PC-3 (cell line): ENCODE measurements at regions of chr3 and their contacts with region 1.

Region 1: DNA sequence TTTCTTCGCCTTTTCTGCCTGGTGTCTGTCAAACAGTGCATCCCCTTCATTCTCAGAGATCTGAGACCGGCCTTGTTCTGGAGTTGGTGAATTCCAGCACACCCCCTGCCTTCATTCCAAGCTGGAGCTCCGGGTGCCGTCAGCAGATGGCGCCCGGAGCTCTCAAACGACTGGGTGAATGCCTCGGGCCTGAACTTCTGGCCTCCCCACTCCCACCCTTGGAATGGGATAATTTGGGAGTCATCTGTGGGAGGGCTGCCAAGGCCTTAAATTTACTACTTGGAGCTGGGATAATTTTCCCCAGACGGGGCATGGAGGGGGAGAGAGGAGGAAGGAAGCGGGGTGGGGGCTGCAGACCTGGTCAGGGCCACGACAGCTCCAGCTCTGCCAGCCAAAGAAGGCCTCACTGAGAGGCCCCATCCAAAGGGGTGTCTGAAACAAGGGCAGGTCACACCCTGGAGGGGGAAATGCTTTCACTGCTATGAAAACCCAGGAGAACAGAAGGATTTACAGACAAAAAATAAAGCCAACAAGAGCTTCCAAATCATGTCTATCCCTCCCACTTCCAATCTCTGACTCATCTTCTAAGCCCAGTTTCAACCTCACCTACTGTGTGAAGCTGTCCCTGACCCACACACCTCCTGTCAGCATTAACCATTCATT is 187.9 kb downstream of the OPA1 start:
- DNase-seq: peak; percentile 95
- ATAC-seq: peak; percentile 84
- H3K4me3 ChIP-seq: no peak overlapping the region
- H3K27ac ChIP-seq: peak overlapping the region; percentile 78
- H3K4me1 ChIP-seq: peaks cover 47% of the 10 kb centered on the region
- H3K27me3 ChIP-seq: no peaks in the 10 kb centered on the region
- CTCF ChIP-seq: peak; percentile 97

Region 2: GRCh38 chr3:193831495-193832455 is 50.8 kb after region 1 on chr3:
- CTCF ChIA-PET with region 1: no interaction called
- POLR2A ChIA-PET with region 1: no interaction called
- intact Hi-C with region 1: loop called (anchors 5 kb)
- DNase-seq: no peak
- ATAC-seq: no peak
- H3K4me3 ChIP-seq: no peak overlapping the region
- H3K27ac ChIP-seq: no peak overlapping the region
- H3K4me1 ChIP-seq: peaks cover 45% of the 10 kb centered on the region
- H3K27me3 ChIP-seq: no peaks in the 10 kb centered on the region
- CTCF ChIP-seq: no peak

Region 3: DNA sequence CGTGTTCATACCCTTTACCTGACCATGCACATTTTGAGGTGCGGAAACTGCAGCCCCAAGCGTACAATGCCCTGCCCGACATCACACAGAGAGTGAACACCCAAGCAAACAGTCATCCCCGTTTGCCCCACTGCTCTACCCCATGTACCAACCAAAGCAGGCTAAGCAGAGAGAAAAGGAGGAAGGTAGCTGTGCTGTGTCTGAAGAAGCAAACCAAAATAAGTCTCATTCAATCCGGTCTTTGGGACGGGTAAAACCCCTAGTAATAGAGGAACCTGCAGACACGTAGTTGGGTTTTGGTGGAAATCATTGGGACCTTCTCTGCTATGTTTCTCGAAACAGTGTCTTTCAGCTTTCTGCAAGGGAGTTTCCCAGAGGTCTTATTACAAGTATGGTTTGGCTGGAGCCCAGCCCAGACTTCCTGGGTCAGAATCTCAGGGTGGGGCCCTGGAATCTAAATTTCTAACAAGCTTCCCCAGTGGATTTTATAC is 190.4 kb after region 1 on chr3:
- CTCF ChIA-PET with region 1: no interaction called
- POLR2A ChIA-PET with region 1: no interaction called
- intact Hi-C with region 1: loop called (anchors 2 kb)
- DNase-seq: peak; percentile 81
- ATAC-seq: peak; percentile 86
- H3K4me3 ChIP-seq: peak overlapping the region; percentile 66
- H3K27ac ChIP-seq: peak overlapping the region; percentile 91
- H3K4me1 ChIP-seq: peaks cover 35% of the 10 kb centered on the region
- H3K27me3 ChIP-seq: no peaks in the 10 kb centered on the region
- CTCF ChIP-seq: no peak

Region 4: GRCh38 chr3:194070634-194071409 is 289.9 kb after region 1 on chr3:
- CTCF ChIA-PET with region 1: no interaction called
- POLR2A ChIA-PET with region 1: interaction called, 3 read pairs
- intact Hi-C with region 1: loop called (anchors 5 kb)
- DNase-seq: peak; percentile 93
- ATAC-seq: peak; percentile 80
- H3K4me3 ChIP-seq: peak overlapping the region; percentile 60
- H3K27ac ChIP-seq: no peak overlapping the region
- H3K4me1 ChIP-seq: peaks cover 35% of the 10 kb centered on the region
- H3K27me3 ChIP-seq: no peaks in the 10 kb centered on the region
- CTCF ChIP-seq: no peak

Region 5: DNA sequence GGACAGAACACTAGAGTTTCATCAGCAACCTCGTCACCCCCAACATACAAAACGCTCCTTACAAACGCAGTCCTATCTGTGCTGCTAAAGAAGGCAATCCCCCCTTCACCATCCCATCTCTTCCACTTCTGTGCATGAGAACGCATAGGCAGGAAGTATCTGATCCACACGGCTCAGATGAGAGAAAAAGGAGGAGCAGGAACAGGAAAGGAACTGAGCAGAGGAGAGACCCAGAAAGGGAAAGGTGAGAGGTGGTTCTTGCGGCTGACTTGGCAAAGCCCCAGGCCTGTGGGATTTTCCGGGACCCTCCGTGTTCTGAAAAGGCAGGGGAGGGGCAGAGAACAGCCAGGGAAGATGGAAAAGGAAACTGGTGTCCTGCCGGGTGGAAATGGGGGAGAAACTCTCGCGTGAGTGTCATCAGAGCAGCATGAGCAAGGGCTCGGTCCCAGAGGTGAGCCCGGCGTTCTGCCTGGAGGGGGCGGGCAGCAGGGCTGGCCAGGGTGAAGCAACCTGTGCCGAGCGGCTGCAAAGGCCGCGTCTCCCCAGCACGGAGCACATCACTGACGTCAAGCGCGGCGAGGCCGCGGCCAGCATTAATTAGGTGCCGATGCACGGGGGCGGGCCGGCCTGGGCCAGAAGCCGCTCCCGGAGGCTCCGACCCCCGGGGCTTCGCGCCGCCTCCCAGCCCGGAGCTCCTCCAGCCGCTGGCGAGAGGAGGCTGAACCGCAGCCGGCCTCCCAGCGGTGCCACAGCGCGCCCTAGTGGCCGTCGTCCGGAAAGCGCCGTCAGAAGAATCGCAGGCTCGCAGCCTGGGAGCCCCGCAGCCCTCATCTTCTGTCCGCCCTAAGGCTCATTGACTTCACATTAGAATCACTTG is 534.4 kb after region 1 on chr3:
- CTCF ChIA-PET with region 1: interaction called, 50 read pairs
- POLR2A ChIA-PET with region 1: interaction called, 12 read pairs
- intact Hi-C with region 1: loop called (anchors 1 kb)
- DNase-seq: peak; percentile 89
- ATAC-seq: peak; percentile 73
- H3K4me3 ChIP-seq: peak overlapping the region; percentile 64
- H3K27ac ChIP-seq: no peak overlapping the region
- H3K4me1 ChIP-seq: peaks cover 32% of the 10 kb centered on the region
- H3K27me3 ChIP-seq: no peaks in the 10 kb centered on the region
- CTCF ChIP-seq: peak; percentile 93